CD8-positive, alpha-beta memory T cell (primary cell): ENCODE measurements at regions of chr3 and their contacts with region 1.

Region 1: DNA sequence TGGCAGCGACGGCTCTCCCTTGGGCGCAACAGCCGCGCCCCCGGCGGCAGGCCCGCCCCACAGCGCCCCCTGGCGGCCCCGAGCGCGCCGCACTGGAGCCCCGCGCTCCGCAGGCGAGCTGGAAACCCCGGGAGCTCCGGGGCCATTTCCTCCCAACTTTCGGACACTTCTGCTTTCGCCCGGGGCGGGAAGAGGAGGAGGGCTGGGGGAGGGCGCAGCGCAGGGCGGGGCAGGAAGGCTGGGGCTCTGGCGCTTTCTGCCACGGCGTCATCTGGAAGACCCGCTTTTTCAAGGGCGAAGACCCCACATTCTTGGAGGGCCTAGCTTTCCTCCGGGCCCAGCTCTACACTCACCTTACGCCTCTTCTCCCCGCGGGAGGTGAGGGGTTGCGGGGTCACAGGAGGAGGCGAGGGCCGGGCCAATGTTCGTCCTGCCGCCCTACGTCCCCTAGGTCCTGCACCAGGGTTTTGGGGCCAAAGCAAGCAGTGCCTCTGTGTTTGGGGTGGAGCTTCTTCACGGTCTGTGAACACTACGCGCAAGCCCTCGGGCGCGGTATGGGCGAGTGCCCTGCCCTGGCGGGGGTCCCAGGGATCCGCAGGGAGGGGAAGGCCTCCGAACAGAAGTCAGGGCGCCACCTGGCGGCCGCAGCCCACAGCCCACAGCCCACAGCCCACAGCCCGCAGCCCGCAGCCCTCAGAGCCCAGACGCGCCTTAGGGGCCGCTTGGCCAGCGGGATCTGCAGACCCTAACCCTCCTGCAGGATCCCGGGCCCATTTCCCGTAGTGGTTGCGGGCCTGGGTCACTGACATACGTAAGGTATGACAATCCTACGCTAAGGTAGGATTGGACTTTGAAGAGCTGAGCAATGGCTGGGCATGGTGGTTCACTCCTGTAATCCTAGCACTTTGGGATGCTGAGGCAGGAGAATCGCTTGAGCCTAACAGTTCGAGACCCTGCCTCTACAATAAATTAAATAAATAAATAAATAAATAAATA is 31.1 kb downstream of the FOXL2 start:
- DNase-seq: peak; percentile 68 to 85 (median 75)
- H3K4me3 ChIP-seq: peak overlapping the region; percentile 90
- H3K4me3 Mint-ChIP-seq: peak overlapping the region; percentile 83 to 94 (median 85)
- H3K27ac ChIP-seq: peak overlapping the region; percentile 73
- H3K27ac Mint-ChIP-seq: peak overlapping the region in 6 of 8 donors; percentile 61 to 96 (median 63)
- H3K4me1 ChIP-seq: peaks cover 5% of the 10 kb centered on the region
- H3K4me1 Mint-ChIP-seq: peaks cover 5 to 6% (median 6%) of the 10 kb centered on the region in 3 donors
- H3K27me3 ChIP-seq: no peaks in the 10 kb centered on the region
- H3K27me3 Mint-ChIP-seq: peaks cover 5 to 7% of the 10 kb centered on the region in 2 donors

Region 2: GRCh38 chr3:138417559-138417982 is 498.2 kb before region 1 on chr3:
- CTCF ChIA-PET with region 1: interaction called, 46 read pairs
- POLR2A ChIA-PET with region 1: no interaction called
- DNase-seq: peak; percentile 17 to 67 (median 37)
- H3K4me3 ChIP-seq: no peak overlapping the region
- H3K4me3 Mint-ChIP-seq: no peak overlapping the region
- H3K27ac ChIP-seq: no peak overlapping the region
- H3K27ac Mint-ChIP-seq: no peak overlapping the region
- H3K4me1 ChIP-seq: peaks cover 4% of the 10 kb centered on the region
- H3K4me1 Mint-ChIP-seq: no peaks in the 10 kb centered on the region
- H3K27me3 ChIP-seq: peaks cover 4% of the 10 kb centered on the region
- H3K27me3 Mint-ChIP-seq: peaks cover 12 to 25% of the 10 kb centered on the region in 2 donors

Region 3: GRCh38 chr3:138608322-138609135 is 307.3 kb before region 1 on chr3 and contains the start of gene FAIM:
- CTCF ChIA-PET with region 1: interaction called, 17 read pairs
- POLR2A ChIA-PET with region 1: no interaction called
- DNase-seq: peak; percentile 51 to 81 (median 77)
- H3K4me3 ChIP-seq: peak within 1 kb of the TSS; percentile 63
- H3K4me3 Mint-ChIP-seq: peak within 1 kb of the TSS; percentile 80 to 97 (median 91)
- H3K27ac ChIP-seq: peak within 1 kb of the TSS; percentile 69
- H3K27ac Mint-ChIP-seq: peak within 1 kb of the TSS; percentile 92 to 99 (median 95)
- H3K4me1 ChIP-seq: peaks cover 13% of the 10 kb centered on the region
- H3K4me1 Mint-ChIP-seq: peaks cover 12 to 25% (median 15%) of the 10 kb centered on the region in 3 donors
- H3K27me3 ChIP-seq: no peaks in the 10 kb centered on the region
- H3K27me3 Mint-ChIP-seq: peaks cover 0 to 14% of the 10 kb centered on the region in 2 donors
- total RNA-seq, gene FAIM: 8.4 to 8.5 TPM

Region 4: DNA sequence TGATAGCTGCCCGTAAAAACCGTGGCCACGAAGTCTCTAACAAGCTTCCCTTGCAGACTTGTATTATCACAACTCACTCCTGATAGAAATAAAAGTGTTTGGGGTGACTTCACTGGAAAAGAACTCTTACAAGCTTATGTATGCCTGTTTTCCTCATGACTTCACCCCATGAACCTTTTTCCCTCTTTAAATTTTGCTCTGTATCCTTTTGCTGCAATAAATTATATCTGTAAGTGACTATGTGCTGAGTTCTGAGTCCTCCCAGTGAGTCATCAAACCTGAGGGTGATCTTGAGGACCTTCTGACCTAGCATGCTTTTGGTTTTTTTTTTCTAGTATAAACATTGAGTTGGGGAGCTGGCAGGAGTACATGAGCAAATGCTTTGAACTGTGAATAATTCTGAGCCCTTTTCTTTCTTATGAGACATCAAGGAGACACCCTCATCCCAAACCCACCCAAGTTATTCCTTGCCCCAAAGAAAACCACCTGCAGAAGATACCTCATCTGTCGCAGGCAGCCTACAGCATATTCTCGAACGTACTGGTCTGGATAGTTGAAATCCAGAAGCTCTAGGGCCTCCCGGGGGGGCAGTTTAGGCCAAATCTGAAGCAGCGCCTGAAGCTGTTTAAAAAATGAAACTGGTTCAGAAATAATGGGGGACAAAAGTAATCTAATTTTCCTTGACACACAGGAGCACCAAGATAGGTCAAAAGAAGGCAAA is 221.4 kb before region 1 on chr3:
- CTCF ChIA-PET with region 1: interaction called, 198 read pairs
- POLR2A ChIA-PET with region 1: interaction called, 4 read pairs
- DNase-seq: no peak
- H3K4me3 ChIP-seq: no peak overlapping the region
- H3K4me3 Mint-ChIP-seq: no peak overlapping the region
- H3K27ac ChIP-seq: peak overlapping the region; percentile 33
- H3K27ac Mint-ChIP-seq: peak overlapping the region in 2 of 8 donors; percentile 24 to 26
- H3K4me1 ChIP-seq: no peaks in the 10 kb centered on the region
- H3K4me1 Mint-ChIP-seq: no peaks in the 10 kb centered on the region
- H3K27me3 ChIP-seq: no peaks in the 10 kb centered on the region
- H3K27me3 Mint-ChIP-seq: no peaks in the 10 kb centered on the region

Region 5: GRCh38 chr3:138717348-138717747 is 198.5 kb before region 1 on chr3:
- CTCF ChIA-PET with region 1: interaction called, 27 read pairs
- POLR2A ChIA-PET with region 1: no interaction called
- DNase-seq: no peak
- H3K4me3 ChIP-seq: no peak overlapping the region
- H3K4me3 Mint-ChIP-seq: no peak overlapping the region
- H3K27ac ChIP-seq: no peak overlapping the region
- H3K27ac Mint-ChIP-seq: no peak overlapping the region
- H3K4me1 ChIP-seq: no peaks in the 10 kb centered on the region
- H3K4me1 Mint-ChIP-seq: peaks cover 2 to 11% (median 3%) of the 10 kb centered on the region in 3 donors
- H3K27me3 ChIP-seq: no peaks in the 10 kb centered on the region
- H3K27me3 Mint-ChIP-seq: no peaks in the 10 kb centered on the region

Region 6: GRCh38 chr3:138781012-138781470 is 134.8 kb before region 1 on chr3:
- CTCF ChIA-PET with region 1: interaction called, 18 read pairs
- POLR2A ChIA-PET with region 1: interaction called, 4 read pairs
- DNase-seq: peak; percentile 45 to 85 (median 61)
- H3K4me3 ChIP-seq: no peak overlapping the region
- H3K4me3 Mint-ChIP-seq: peak overlapping the region; percentile 38 to 76 (median 58)
- H3K27ac ChIP-seq: peak overlapping the region; percentile 49
- H3K27ac Mint-ChIP-seq: peak overlapping the region; percentile 73 to 99 (median 93)
- H3K4me1 ChIP-seq: peaks cover 23% of the 10 kb centered on the region
- H3K4me1 Mint-ChIP-seq: peaks cover 21 to 53% (median 44%) of the 10 kb centered on the region in 3 donors
- H3K27me3 ChIP-seq: no peaks in the 10 kb centered on the region
- H3K27me3 Mint-ChIP-seq: no peaks in the 10 kb centered on the region

Region 7: GRCh38 chr3:138856799-138857198 is 59.0 kb before region 1 on chr3:
- CTCF ChIA-PET with region 1: no interaction called
- POLR2A ChIA-PET with region 1: no interaction called
- DNase-seq: no peak
- H3K4me3 ChIP-seq: no peak overlapping the region
- H3K4me3 Mint-ChIP-seq: no peak overlapping the region
- H3K27ac ChIP-seq: no peak overlapping the region
- H3K27ac Mint-ChIP-seq: no peak overlapping the region
- H3K4me1 ChIP-seq: no peaks in the 10 kb centered on the region
- H3K4me1 Mint-ChIP-seq: no peaks in the 10 kb centered on the region
- H3K27me3 ChIP-seq: no peaks in the 10 kb centered on the region
- H3K27me3 Mint-ChIP-seq: peaks cover 0 to 4% of the 10 kb centered on the region in 2 donors

Region 8: GRCh38 chr3:138928727-138929385 is 13.1 kb after region 1 on chr3:
- CTCF ChIA-PET with region 1: interaction called, 89 read pairs
- POLR2A ChIA-PET with region 1: interaction called, 3 read pairs
- DNase-seq: no peak
- H3K4me3 ChIP-seq: no peak overlapping the region
- H3K4me3 Mint-ChIP-seq: no peak overlapping the region
- H3K27ac ChIP-seq: no peak overlapping the region
- H3K27ac Mint-ChIP-seq: no peak overlapping the region
- H3K4me1 ChIP-seq: no peaks in the 10 kb centered on the region
- H3K4me1 Mint-ChIP-seq: no peaks in the 10 kb centered on the region
- H3K27me3 ChIP-seq: no peaks in the 10 kb centered on the region
- H3K27me3 Mint-ChIP-seq: peaks cover 13 to 42% of the 10 kb centered on the region in 2 donors